ENCODE measurements at regions of chr4 and their contacts with region 1.

Region 1: DNA sequence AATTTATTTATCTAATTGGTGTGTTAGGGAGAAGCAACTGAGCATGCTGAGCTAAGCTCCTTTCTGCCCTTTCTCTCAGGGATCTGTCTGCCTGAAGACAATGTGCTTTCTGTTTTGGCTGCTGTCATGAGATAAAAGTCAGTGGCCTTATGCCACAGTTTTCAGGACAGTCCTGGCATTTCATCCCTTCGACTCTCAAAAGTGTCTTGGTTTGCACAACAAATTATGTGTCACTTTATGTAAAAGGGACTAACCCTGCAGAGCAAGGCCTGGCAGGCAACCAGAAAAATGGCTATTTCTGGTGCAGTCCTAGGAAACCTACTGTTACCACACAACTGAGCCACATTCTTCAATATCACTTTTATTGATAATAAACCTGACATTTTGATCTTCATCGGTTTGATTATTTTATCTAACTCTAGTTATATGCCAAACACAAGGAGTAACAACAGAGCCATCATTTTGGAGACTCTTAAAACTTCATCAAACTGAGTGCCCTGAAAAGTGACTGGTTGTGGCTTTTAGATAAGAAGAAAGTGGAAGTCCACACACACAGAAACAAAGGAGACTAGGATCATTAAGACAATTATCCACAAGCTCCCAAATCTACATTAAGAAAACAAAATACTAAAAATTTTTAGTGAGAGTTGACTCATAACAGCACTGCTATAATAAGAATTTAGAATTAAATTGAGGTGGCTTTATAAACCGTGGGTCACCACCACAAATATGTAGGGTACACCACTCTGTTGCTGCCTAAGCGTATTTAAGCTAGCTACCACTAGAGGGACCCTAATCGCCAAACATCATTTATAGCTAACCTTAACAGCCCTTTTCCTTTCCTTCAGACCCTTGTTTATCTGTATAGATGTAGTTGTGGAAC is 95.9 kb upstream of the PTPN13 start:
- DNase-seq: no peak
- ATAC-seq: peak; percentile 62
- H3K4me3 Mint-ChIP-seq: no peak overlapping the region
- H3K27ac Mint-ChIP-seq: no peak overlapping the region
- H3K4me1 Mint-ChIP-seq: no peaks in the 10 kb centered on the region
- H3K27me3 Mint-ChIP-seq: peaks cover 11% of the 10 kb centered on the region
- CTCF ChIP-seq: peak; percentile 38

Region 2: DNA sequence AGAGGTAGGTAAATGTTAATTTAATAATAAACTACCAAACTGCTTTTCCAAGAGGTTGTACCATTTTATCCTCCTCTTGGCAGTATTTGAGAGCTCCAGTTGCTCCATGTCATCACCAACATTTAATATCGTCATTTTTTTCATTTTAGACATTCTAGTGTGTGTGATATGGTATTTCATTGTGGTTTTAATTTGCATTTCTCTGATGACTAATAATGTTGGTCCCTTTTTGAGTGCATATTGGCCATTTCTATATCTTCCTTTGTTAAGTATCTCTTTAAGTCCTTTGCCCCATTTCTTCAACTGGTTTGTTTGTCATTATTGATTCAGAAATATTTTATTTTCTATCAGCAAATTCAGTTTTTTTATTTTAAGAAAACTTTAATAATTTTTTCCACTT is 227.2 kb before region 1 on chr4:
- CTCF ChIA-PET with region 1: no interaction called
- POLR2A ChIA-PET with region 1: no interaction called
- intact Hi-C with region 1: no loop called
- DNase-seq: no peak
- ATAC-seq: no peak
- H3K4me3 Mint-ChIP-seq: no peak overlapping the region
- H3K27ac Mint-ChIP-seq: no peak overlapping the region
- H3K4me1 Mint-ChIP-seq: no peaks in the 10 kb centered on the region
- H3K27me3 Mint-ChIP-seq: no peaks in the 10 kb centered on the region
- CTCF ChIP-seq: no peak

Region 3: GRCh38 chr4:86508436-86508835 is 10.2 kb after region 1 on chr4:
- CTCF ChIA-PET with region 1: interaction called, 14 read pairs
- POLR2A ChIA-PET with region 1: no interaction called
- intact Hi-C with region 1: no loop called
- DNase-seq: no peak
- ATAC-seq: no peak
- H3K4me3 Mint-ChIP-seq: no peak overlapping the region
- H3K27ac Mint-ChIP-seq: no peak overlapping the region
- H3K4me1 Mint-ChIP-seq: no peaks in the 10 kb centered on the region
- H3K27me3 Mint-ChIP-seq: peaks cover 4% of the 10 kb centered on the region
- CTCF ChIP-seq: no peak

Region 4: GRCh38 chr4:86586160-86586572 is 87.9 kb after region 1 on chr4:
- CTCF ChIA-PET with region 1: no interaction called
- POLR2A ChIA-PET with region 1: no interaction called
- intact Hi-C with region 1: no loop called
- DNase-seq: no peak
- ATAC-seq: no peak
- H3K4me3 Mint-ChIP-seq: no peak overlapping the region
- H3K27ac Mint-ChIP-seq: no peak overlapping the region
- H3K4me1 Mint-ChIP-seq: peaks cover 5% of the 10 kb centered on the region
- H3K27me3 Mint-ChIP-seq: peaks cover 6% of the 10 kb centered on the region
- CTCF ChIP-seq: no peak

Region 5: GRCh38 chr4:86901866-86902265 is 403.6 kb after region 1 on chr4:
- CTCF ChIA-PET with region 1: interaction called, 12 read pairs
- POLR2A ChIA-PET with region 1: no interaction called
- intact Hi-C with region 1: no loop called
- DNase-seq: no peak
- ATAC-seq: no peak
- H3K4me3 Mint-ChIP-seq: no peak overlapping the region
- H3K27ac Mint-ChIP-seq: no peak overlapping the region
- H3K4me1 Mint-ChIP-seq: peaks cover 1% of the 10 kb centered on the region
- H3K27me3 Mint-ChIP-seq: peaks cover 7% of the 10 kb centered on the region
- CTCF ChIP-seq: no peak

Region 6: DNA sequence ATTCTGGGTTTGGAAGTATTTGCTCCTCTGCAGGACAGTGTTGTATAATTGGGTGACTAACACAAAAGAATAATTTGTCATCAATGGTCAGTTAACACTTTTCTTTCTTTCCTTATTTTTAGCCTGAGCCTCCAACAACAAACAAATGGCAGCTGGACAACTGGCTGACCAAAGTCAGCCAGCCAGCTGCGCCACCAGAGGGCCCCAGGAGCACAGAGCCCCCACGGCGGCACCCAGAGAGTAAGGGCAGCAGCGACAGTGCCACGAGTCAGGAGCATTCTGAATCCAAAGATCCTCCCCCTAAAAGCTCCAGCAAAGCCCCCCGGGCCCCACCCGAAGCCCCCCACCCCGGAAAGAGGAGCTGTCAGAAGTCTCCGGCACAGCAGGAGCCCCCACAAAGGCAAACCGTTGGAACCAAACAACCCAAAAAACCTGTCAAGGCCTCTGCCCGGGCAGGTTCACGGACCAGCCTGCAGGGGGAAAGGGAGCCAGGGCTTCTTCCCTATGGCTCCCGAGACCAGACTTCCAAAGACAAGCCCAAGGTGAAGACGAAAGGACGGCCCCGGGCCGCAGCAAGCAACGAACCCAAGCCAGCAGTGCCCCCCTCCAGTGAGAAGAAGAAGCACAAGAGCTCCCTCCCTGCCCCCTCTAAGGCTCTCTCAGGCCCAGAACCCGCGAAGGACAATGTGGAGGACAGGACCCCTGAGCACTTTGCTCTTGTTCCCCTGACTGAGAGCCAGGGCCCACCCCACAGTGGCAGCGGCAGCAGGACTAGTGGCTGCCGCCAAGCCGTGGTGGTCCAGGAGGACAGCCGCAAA is 616.2 kb after region 1 on chr4:
- CTCF ChIA-PET with region 1: no interaction called
- POLR2A ChIA-PET with region 1: no interaction called
- intact Hi-C with region 1: loop called (anchors 5 kb)
- DNase-seq: no peak
- ATAC-seq: no peak
- H3K4me3 Mint-ChIP-seq: no peak overlapping the region
- H3K27ac Mint-ChIP-seq: no peak overlapping the region
- H3K4me1 Mint-ChIP-seq: no peaks in the 10 kb centered on the region
- H3K27me3 Mint-ChIP-seq: no peaks in the 10 kb centered on the region
- CTCF ChIP-seq: no peak

Region 7: DNA sequence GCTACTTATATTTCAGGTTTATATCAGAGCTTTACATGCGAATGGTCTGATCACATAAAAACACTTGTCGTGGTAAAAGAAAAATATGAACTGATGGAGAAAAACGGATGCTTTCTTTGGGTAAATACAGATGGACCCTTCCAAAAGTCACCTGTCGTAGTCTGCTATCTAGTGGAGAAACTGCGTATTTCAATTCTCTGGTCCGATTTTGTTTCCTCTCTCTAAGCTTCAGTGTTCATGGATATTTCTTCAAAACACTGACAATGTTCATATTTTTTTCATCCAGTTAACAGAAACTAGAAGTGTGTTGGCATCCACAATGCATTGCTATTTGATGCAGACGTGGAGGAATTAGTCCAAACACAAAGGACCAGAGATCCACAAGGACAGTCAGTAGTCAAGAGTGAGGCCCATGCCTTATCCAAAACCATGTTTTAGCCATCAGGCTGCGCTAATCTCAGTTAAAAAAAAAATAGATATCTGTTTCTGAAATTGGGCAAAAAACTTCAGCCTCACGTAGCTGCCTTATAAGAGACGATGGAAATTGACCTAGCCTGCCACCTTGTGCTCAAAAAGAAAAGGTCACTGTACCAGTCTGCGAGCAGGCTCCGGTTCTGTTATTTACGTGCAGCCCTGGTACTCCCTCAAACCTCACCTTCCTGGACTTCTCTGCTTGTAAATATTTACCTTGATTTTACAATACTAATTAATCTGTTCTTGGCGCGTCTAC is 1350.6 kb after region 1 on chr4:
- CTCF ChIA-PET with region 1: no interaction called
- POLR2A ChIA-PET with region 1: no interaction called
- intact Hi-C with region 1: loop called (anchors 10 kb)
- DNase-seq: no peak
- ATAC-seq: peak; percentile 70
- H3K4me3 Mint-ChIP-seq: no peak overlapping the region
- H3K27ac Mint-ChIP-seq: no peak overlapping the region
- H3K4me1 Mint-ChIP-seq: peaks cover 5% of the 10 kb centered on the region
- H3K27me3 Mint-ChIP-seq: peaks cover 12% of the 10 kb centered on the region
- CTCF ChIP-seq: no peak

Measured in activated B cell treated with CpG ODN at 0.5 μM for 24 hours (primary cell).